Heart left ventricle (tissue), 16 donors: ENCODE measurements at regions of chr16 and their contacts with region 1.

Region 1: GRCh38 chr16:4544473-4544872 is 5.9 kb upstream of the CDIP1 start:
- DNase-seq: peak in 1 of 5 donors; percentile 9
- ATAC-seq: no peak
- H3K4me3 ChIP-seq: no peak overlapping the region
- H3K27ac ChIP-seq: no peak overlapping the region
- H3K4me1 ChIP-seq: no peaks in the 10 kb centered on the region
- H3K27me3 ChIP-seq: no peaks in the 10 kb centered on the region
- CTCF ChIP-seq: no peak
- POLR2A ChIP-seq: no peak

Region 2: GRCh38 chr16:4506450-4506849 is 38.0 kb before region 1 on chr16:
- intact Hi-C with region 1: loop called (anchors 1 to 5 kb)
- DNase-seq: peak in 4 of 5 donors; percentile 57 to 66 (median 61)
- ATAC-seq: peak; percentile 69 to 77 (median 70)
- H3K4me3 ChIP-seq: no peak overlapping the region
- H3K27ac ChIP-seq: peak overlapping the region in 3 of 12 donors; percentile 21 to 84 (median 38)
- H3K4me1 ChIP-seq: peaks cover 0 to 51% (median 26%) of the 10 kb centered on the region in 12 donors
- H3K27me3 ChIP-seq: no peaks in the 10 kb centered on the region
- CTCF ChIP-seq: peak; percentile 71 to 87 (median 80)
- POLR2A ChIP-seq: no peak

Region 3: DNA sequence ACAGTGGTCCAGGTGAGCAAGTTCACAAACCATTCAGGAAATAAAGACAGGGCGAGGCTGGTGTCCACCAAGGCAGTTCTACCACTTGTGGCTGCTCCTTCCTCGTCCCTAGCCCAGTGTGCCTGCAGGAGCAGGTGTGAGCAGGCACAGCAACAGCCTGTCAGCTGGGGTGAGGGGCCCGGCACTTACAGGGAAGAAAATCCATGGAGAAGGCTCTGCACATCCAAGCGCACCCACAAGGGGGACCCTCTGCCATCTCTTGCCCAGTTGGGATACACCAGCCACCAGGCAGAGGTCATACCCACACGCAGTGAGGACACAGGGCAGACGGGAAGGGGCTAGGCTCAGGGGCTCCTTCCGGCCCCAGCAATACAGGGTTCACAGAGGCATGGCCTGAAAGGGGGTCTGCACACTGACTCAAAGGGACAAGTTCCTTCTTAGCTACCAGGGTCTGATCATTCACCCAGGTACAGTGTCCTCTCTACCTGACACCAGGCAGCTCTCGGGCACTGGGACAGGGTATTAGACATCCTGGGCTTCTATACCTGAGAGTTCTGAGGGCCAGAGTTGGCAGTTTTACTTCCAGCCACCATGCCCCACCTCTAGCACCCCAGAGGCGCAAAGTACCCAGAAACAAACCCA is 32.9 kb before region 1 on chr16:
- intact Hi-C with region 1: loop called (anchors 1 to 5 kb)
- DNase-seq: peak in 4 of 5 donors; percentile 52 to 73 (median 66)
- ATAC-seq: peak; percentile 39 to 71 (median 63)
- H3K4me3 ChIP-seq: no peak overlapping the region
- H3K27ac ChIP-seq: peak overlapping the region in 11 of 12 donors; percentile 14 to 81 (median 60)
- H3K4me1 ChIP-seq: peaks cover 0 to 61% (median 51%) of the 10 kb centered on the region in 12 donors
- H3K27me3 ChIP-seq: no peaks in the 10 kb centered on the region
- CTCF ChIP-seq: peak; percentile 33 to 66 (median 55)
- POLR2A ChIP-seq: no peak

Region 4: GRCh38 chr16:4519274-4520058 is 25.0 kb before region 1 on chr16:
- intact Hi-C with region 1: loop called in 3 of 10 experiments (anchors 1 to 5 kb)
- DNase-seq: no peak
- ATAC-seq: no peak
- H3K4me3 ChIP-seq: no peak overlapping the region
- H3K27ac ChIP-seq: no peak overlapping the region
- H3K4me1 ChIP-seq: peaks cover 8 to 59% (median 32%) of the 10 kb centered on the region in 12 donors
- H3K27me3 ChIP-seq: no peaks in the 10 kb centered on the region
- CTCF ChIP-seq: no peak
- POLR2A ChIP-seq: no peak

Region 5: DNA sequence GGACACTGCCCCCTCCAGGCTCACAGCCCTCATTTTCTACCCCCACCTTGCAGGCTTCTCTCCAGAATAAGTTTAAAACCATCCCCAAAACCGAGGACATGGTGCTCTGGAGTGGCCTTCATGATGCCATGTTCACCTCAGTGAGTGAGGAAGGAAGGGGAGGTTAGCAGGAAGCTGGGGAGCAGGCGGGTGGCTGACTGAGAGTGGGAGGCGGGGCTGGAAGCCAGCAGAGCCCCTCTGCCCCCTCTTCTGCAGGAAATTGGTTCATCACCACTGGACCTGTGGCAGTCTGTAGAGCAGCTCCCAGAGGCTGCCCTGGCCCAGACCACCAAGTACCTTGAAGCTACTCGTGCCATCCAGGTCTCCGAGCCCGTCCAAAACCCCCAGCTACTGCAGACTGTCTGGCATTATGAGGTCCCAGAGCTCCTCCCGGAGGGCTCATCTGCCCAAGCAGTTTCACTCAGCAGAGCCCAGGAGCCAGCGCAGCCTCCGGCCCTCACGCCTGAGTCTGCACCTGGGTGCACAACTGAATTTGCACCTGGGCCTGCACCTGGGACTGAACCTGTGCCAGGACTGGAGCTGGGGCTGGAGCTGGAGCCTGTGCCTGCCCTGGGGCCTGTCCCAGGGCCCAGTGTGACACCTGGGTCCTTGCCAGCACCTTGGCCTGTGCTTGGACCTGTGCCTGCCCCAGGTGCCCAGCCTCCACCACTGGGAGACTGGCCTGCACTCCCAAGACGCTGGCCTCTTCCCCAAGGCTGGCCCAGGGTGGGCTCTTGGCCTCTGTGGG is 30.6 kb after region 1 on chr16:
- intact Hi-C with region 1: no loop called
- DNase-seq: no peak
- ATAC-seq: peak in 1 of 4 donors; percentile 29
- H3K4me3 ChIP-seq: no peak overlapping the region
- H3K27ac ChIP-seq: no peak overlapping the region
- H3K4me1 ChIP-seq: no peaks in the 10 kb centered on the region
- H3K27me3 ChIP-seq: no peaks in the 10 kb centered on the region
- CTCF ChIP-seq: no peak
- POLR2A ChIP-seq: no peak

Region 6: DNA sequence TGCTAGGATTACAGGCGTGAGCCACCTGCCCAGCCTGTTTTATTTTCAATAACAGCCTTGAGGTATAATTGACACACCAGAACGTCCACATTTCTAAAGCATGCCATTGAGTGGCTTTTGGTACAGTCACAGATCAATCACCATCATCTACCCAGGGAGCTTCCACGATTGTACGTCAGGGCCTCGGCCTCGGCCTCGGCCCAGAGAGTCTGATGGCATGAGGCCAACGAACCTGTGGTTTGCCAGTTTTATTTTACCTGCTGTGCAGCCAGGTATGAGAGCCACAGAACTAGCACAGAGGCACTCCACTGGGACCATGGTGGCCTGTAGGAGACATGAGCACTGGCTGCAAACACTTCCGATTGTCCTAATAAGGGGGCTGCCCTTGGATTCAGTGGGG is 61.9 kb after region 1 on chr16:
- intact Hi-C with region 1: no loop called
- DNase-seq: no peak
- ATAC-seq: no peak
- H3K4me3 ChIP-seq: no peak overlapping the region
- H3K27ac ChIP-seq: no peak overlapping the region
- H3K4me1 ChIP-seq: peaks cover 0 to 15% (median 1%) of the 10 kb centered on the region in 12 donors
- H3K27me3 ChIP-seq: no peaks in the 10 kb centered on the region
- CTCF ChIP-seq: no peak
- POLR2A ChIP-seq: no peak